Panc1 (cell line): ENCODE measurements at regions of chr11 and their contacts with region 1.

Region 1: GRCh38 chr11:7088921-7089320 is at the start of gene RBMXL2:
- DNase-seq: no peak
- ATAC-seq: no peak
- H3K4me3 ChIP-seq: no peak within 1 kb of the TSS
- H3K27ac ChIP-seq: no peak within 1 kb of the TSS
- H3K4me1 ChIP-seq: no peaks in the 10 kb centered on the region
- H3K27me3 ChIP-seq: peaks cover 36% of the 10 kb centered on the region; the same call in 1 of the 2 replicates
- CTCF ChIP-seq: no peak
- total RNA-seq, gene RBMXL2: 0.10 TPM

Region 2: DNA sequence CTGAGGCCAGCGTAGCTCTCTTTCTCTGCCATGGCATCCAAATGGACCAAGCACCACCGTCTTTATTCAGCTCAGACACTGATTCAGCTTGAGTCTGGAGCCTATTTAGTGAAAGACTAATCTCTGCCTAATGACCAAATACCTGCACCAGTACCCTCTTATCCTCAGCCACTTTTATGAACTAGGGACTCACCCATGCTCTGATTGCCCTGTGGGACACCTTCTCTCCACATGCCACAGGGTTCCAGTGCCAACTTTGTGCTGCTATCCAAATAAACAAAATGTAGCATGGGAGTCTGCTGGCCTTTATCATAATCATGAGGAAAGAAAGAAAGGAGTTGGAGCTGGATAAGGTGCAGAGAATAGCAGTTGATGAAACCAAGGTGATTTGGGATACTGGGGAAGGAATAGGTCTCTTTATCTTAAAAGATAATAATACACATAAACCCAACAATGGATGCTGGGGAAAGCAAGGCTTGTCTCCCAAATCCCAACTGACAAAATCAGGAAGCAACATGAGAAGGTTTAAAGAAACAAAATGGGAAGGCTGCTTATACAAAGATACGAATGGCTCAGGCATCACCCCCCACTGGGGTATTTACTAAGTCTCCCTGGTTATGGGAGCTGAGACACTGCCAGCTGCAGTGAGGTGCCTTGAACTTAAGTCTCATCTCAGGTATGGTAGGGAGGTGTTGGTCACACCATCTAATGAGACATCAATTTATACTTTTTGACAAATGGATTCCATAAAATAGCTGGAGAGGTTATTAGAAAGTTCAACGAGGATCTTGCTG is 226.1 kb after region 1 on chr11:
- CTCF ChIA-PET with region 1: no interaction called
- POLR2A ChIA-PET with region 1: no interaction called
- in situ Hi-C with region 1: no loop called
- intact Hi-C with region 1: no loop called
- DNase-seq: no peak
- ATAC-seq: no peak
- H3K4me3 ChIP-seq: no peak overlapping the region
- H3K27ac ChIP-seq: no peak overlapping the region
- H3K4me1 ChIP-seq: no peaks in the 10 kb centered on the region
- H3K27me3 ChIP-seq: no peaks in the 10 kb centered on the region
- CTCF ChIP-seq: no peak

Region 3: GRCh38 chr11:7548659-7549274 is 459.8 kb after region 1 on chr11:
- CTCF ChIA-PET with region 1: interaction called, 10 read pairs
- POLR2A ChIA-PET with region 1: no interaction called
- in situ Hi-C with region 1: no loop called
- intact Hi-C with region 1: no loop called
- DNase-seq: no peak
- ATAC-seq: peak; percentile 80
- H3K4me3 ChIP-seq: no peak overlapping the region
- H3K27ac ChIP-seq: no peak overlapping the region
- H3K4me1 ChIP-seq: no peaks in the 10 kb centered on the region
- H3K27me3 ChIP-seq: no peaks in the 10 kb centered on the region
- CTCF ChIP-seq: peak; percentile 71